ENCODE measurements at regions of chr6 and their contacts with region 1.

Region 1: GRCh38 chr6:111873178-111874024 is at the start of gene FYN:
- DNase-seq: peak; percentile 98
- ATAC-seq: peak; percentile 87 to 98 (median 92)
- H3K4me3 ChIP-seq: peak within 1 kb of the TSS; percentile 70
- H3K4me3 Mint-ChIP-seq: peak within 1 kb of the TSS; percentile 98
- H3K27ac ChIP-seq: peak within 1 kb of the TSS; percentile 86
- H3K27ac Mint-ChIP-seq: peak within 1 kb of the TSS; percentile 83 to 97
- H3K4me1 ChIP-seq: peaks cover 18% of the 10 kb centered on the region
- H3K4me1 Mint-ChIP-seq: peaks cover 49 to 53% of the 10 kb centered on the region in 2 donors
- H3K27me3 ChIP-seq: no peaks in the 10 kb centered on the region
- H3K27me3 Mint-ChIP-seq: no peaks in the 10 kb centered on the region
- CTCF ChIP-seq: peak; percentile 21
- total RNA-seq, gene FYN: 616 to 757 (median 713) TPM

Region 2: DNA sequence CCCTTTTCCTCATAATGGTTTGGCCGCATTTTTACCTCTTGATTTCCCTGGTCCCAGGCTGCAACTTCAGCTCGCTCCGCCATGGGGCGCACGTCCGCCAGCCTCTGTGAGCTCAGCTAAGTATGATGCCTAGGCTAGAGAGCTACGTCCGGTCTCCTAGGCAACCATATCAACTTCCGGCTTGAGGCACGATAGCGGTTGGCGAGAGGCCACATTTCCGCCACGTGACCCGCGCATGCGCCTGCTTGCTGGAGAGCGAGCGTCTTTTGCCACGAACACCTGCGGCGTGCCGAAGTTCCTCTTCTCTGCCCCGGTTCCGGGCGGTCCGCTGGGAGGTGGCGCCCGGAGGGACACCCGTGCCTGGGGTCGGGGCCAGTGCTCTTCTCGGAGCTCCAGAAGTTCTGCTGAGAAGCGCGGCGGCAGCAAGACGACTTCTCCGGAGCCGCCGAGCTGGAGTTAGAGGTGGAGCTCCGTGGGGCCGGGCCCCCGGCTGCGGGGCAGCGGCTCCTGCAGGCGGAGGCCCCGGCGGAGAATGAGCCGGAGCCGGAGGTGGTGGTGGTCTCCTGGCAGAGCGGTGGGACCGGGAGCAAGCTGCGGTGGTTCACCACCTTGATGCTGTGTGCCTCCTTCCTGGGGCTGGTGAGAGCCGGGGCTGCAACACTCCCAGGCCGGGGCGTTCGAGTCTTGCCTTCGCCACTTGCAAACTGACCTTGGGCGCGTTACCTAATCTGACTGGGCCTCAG is 614.1 kb before region 1 on chr6:
- intact Hi-C with region 1: loop called (anchors 2 kb)
- DNase-seq: peak; percentile 99 to 100
- ATAC-seq: peak; percentile 94 to 100 (median 97)
- H3K4me3 ChIP-seq: peak overlapping the region; percentile 70
- H3K4me3 Mint-ChIP-seq: peak overlapping the region; percentile 84
- H3K27ac ChIP-seq: peak overlapping the region; percentile 91
- H3K27ac Mint-ChIP-seq: peak overlapping the region; percentile 86 to 87
- H3K4me1 ChIP-seq: peaks cover 17% of the 10 kb centered on the region
- H3K4me1 Mint-ChIP-seq: peaks cover 9 to 20% of the 10 kb centered on the region in 2 donors
- H3K27me3 ChIP-seq: no peaks in the 10 kb centered on the region
- H3K27me3 Mint-ChIP-seq: peaks cover 4 to 8% of the 10 kb centered on the region in 2 donors
- CTCF ChIP-seq: peak; percentile 81

Region 3: DNA sequence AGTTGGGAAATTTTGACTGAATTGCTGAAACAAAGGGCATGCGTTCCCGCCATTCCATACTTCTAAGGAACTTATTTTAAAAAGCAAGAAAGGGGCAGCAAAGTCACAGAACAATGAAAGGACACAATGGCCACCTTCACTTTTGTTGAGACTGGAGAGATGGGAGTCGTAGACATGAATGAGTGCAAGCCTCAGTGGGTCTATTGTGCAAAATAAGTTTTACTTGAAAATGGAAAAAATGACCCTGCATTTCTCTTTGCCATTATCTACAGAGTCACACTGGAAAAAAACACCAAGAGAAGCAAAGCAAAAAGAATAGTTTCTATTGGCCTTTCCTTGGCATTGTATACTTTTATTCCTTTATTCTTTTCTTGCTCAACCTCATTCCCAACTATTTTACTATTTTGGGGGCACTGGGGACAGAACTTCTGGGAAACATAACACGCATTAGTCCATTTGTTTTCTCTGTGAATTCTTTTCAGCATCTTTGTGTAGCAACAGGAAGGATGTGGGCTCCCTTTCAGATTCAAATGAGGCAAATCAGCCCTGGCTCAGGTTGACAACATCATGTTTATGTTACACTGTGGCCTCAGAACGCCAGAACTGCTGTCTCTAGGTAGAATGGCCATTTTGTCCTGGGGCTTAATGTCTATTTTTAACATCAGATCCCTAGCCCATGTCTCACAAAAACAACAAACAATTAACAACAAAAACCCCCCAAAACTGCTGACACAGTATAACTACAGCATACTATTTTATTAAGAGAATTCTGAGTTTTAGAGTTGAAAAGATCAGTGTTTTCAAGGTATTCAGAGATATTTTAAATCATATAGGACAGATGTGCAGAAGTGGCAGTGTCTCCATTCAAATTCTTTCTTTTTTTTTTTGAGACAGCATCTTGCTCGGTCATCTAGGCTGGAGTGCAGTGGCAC is 122.4 kb before region 1 on chr6:
- intact Hi-C with region 1: loop called (anchors 5 kb)
- DNase-seq: peak; percentile 53 to 92
- ATAC-seq: peak; percentile 70 to 83 (median 80)
- H3K4me3 ChIP-seq: no peak overlapping the region
- H3K4me3 Mint-ChIP-seq: peak overlapping the region; percentile 86
- H3K27ac ChIP-seq: peak overlapping the region; percentile 99
- H3K27ac Mint-ChIP-seq: peak overlapping the region; percentile 92 to 100
- H3K4me1 ChIP-seq: peaks cover 57% of the 10 kb centered on the region
- H3K4me1 Mint-ChIP-seq: peaks cover 95 to 96% of the 10 kb centered on the region in 2 donors
- H3K27me3 ChIP-seq: no peaks in the 10 kb centered on the region
- H3K27me3 Mint-ChIP-seq: no peaks in the 10 kb centered on the region
- CTCF ChIP-seq: no peak

Region 4: DNA sequence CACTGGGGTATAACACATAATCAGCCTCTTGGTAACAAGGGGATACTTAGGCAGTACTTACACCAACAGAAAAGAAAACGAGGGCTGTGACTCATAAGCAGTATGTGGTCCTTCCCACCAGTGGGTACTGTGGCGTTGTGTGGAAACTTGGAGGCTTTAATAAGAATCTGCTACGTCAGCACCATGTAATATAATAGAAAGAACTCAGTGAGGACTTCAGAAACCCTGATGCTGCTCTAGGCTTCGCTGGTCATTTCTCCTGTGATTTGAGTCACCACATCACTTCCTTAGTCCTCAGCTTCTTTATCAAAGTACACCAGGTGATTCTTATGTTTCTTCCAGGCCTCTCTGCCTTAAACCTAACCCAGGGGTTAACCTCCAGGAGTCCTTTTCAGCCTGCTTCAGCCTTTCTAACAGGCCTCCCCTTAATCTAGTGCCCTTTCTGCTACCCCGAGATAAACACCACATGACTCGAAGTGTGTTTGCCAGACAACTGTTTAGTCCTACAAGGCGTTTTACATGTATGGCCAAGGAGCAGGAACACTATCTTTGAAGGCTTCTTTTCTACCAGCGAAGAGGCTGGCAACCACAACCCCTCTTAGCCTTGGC is 68.7 kb before region 1 on chr6:
- intact Hi-C with region 1: loop called (anchors 2 kb)
- DNase-seq: peak; percentile 73 to 88
- ATAC-seq: peak; percentile 76 to 85 (median 85)
- H3K4me3 ChIP-seq: no peak overlapping the region
- H3K4me3 Mint-ChIP-seq: peak overlapping the region; percentile 78
- H3K27ac ChIP-seq: peak overlapping the region; percentile 75
- H3K27ac Mint-ChIP-seq: peak overlapping the region; percentile 94 to 98
- H3K4me1 ChIP-seq: peaks cover 58% of the 10 kb centered on the region
- H3K4me1 Mint-ChIP-seq: peaks cover 80 to 94% of the 10 kb centered on the region in 2 donors
- H3K27me3 ChIP-seq: no peaks in the 10 kb centered on the region
- H3K27me3 Mint-ChIP-seq: no peaks in the 10 kb centered on the region
- CTCF ChIP-seq: no peak

Region 5: GRCh38 chr6:111845441-111845871 is 27.9 kb before region 1 on chr6:
- intact Hi-C with region 1: loop called (anchors 2 kb)
- DNase-seq: no peak
- ATAC-seq: no peak
- H3K4me3 ChIP-seq: no peak overlapping the region
- H3K4me3 Mint-ChIP-seq: no peak overlapping the region
- H3K27ac ChIP-seq: peak overlapping the region; percentile 49
- H3K27ac Mint-ChIP-seq: no peak overlapping the region
- H3K4me1 ChIP-seq: peaks cover 74% of the 10 kb centered on the region
- H3K4me1 Mint-ChIP-seq: peaks cover 17% of the 10 kb centered on the region in 2 donors
- H3K27me3 ChIP-seq: no peaks in the 10 kb centered on the region
- H3K27me3 Mint-ChIP-seq: no peaks in the 10 kb centered on the region
- CTCF ChIP-seq: no peak

Region 6: GRCh38 chr6:111997078-111997852 is 123.9 kb after region 1 on chr6:
- intact Hi-C with region 1: loop called (anchors 2 kb)
- DNase-seq: peak; percentile 66 to 93
- ATAC-seq: peak; percentile 81 to 90 (median 86)
- H3K4me3 ChIP-seq: no peak overlapping the region
- H3K4me3 Mint-ChIP-seq: peak overlapping the region; percentile 18
- H3K27ac ChIP-seq: no peak overlapping the region
- H3K27ac Mint-ChIP-seq: peak overlapping the region; percentile 27 to 61
- H3K4me1 ChIP-seq: peaks cover 23% of the 10 kb centered on the region
- H3K4me1 Mint-ChIP-seq: peaks cover 30 to 33% of the 10 kb centered on the region in 2 donors
- H3K27me3 ChIP-seq: no peaks in the 10 kb centered on the region
- H3K27me3 Mint-ChIP-seq: no peaks in the 10 kb centered on the region
- CTCF ChIP-seq: peak; percentile 94

Region 7: DNA sequence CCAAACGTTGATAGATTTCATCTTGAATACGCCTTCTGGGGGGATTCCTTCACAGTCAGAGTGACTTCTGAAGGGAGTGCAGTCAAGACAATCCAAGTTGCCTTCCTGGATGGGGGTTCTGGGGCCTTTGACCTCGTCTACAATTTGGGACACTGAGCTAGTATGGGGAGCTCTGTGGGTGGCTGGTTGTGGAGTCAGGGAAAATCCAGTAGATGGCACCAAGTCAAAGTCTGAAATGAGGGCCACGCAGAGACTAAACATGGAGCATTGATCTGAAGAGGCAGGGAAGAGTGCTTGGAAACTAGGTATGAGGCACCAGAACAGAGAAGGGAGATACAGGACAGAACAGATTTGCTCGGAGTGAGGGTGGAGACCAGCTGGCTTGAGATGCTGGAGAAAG is 136.9 kb after region 1 on chr6:
- intact Hi-C with region 1: no loop called
- DNase-seq: peak in 1 of 2 donors; percentile 64
- ATAC-seq: no peak
- H3K4me3 ChIP-seq: no peak overlapping the region
- H3K4me3 Mint-ChIP-seq: no peak overlapping the region
- H3K27ac ChIP-seq: no peak overlapping the region
- H3K27ac Mint-ChIP-seq: no peak overlapping the region
- H3K4me1 ChIP-seq: peaks cover 5% of the 10 kb centered on the region
- H3K4me1 Mint-ChIP-seq: no peaks in the 10 kb centered on the region
- H3K27me3 ChIP-seq: no peaks in the 10 kb centered on the region
- H3K27me3 Mint-ChIP-seq: no peaks in the 10 kb centered on the region
- CTCF ChIP-seq: no peak

Measured in natural killer cell (primary cell).